ENCODE measurements at regions of chr18 and their contacts with region 1.

Region 1: DNA sequence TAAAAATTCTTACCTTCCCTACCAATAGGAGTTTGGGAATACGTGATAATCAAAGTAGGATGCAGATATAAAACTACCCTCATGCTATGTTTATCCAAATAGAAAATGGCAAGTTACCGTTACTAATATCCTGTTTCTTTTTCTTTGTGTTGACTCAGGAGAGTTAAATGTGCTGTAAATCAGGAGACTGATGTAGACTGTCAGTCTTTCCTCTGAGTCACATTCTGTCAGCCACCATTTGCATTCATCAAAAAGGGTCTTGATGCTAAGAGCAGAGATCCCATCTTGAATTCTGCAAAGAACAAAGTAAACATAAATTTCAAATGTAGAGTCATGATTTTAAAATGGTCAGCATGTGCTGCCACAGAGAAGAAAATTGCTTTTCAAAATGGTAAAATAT is 712.8 kb downstream of the SOCS6 start:
- DNase-seq: no peak
- ATAC-seq: no peak
- H3K4me3 ChIP-seq: no peak overlapping the region
- H3K27ac ChIP-seq: no peak overlapping the region
- H3K4me1 ChIP-seq: no peaks in the 10 kb centered on the region
- H3K27me3 ChIP-seq: no peaks in the 10 kb centered on the region
- CTCF ChIP-seq: no peak
- EP300 ChIP-seq: no peak
- POLR2A ChIP-seq: no peak
- RAD21 ChIP-seq: no peak

Region 2: GRCh38 chr18:70709144-70709543 is 292.5 kb before region 1 on chr18:
- CTCF ChIA-PET with region 1: no interaction called
- POLR2A ChIA-PET with region 1: no interaction called
- RAD21 ChIA-PET with region 1: no interaction called
- SMC1A ChIA-PET with region 1: no interaction called
- in situ Hi-C with region 1: no loop called
- intact Hi-C with region 1: no loop called
- DNase-seq: no peak
- ATAC-seq: no peak
- H3K4me3 ChIP-seq: no peak overlapping the region
- H3K27ac ChIP-seq: no peak overlapping the region
- H3K4me1 ChIP-seq: no peaks in the 10 kb centered on the region
- H3K27me3 ChIP-seq: no peaks in the 10 kb centered on the region
- CTCF ChIP-seq: no peak
- EP300 ChIP-seq: no peak
- POLR2A ChIP-seq: no peak
- RAD21 ChIP-seq: no peak

Region 3: GRCh38 chr18:71068338-71068737 is 66.7 kb after region 1 on chr18:
- CTCF ChIA-PET with region 1: no interaction called
- POLR2A ChIA-PET with region 1: no interaction called
- RAD21 ChIA-PET with region 1: no interaction called
- SMC1A ChIA-PET with region 1: no interaction called
- in situ Hi-C with region 1: no loop called
- intact Hi-C with region 1: no loop called
- DNase-seq: no peak
- ATAC-seq: no peak
- H3K4me3 ChIP-seq: no peak overlapping the region
- H3K27ac ChIP-seq: no peak overlapping the region
- H3K4me1 ChIP-seq: no peaks in the 10 kb centered on the region
- H3K27me3 ChIP-seq: no peaks in the 10 kb centered on the region
- CTCF ChIP-seq: no peak
- EP300 ChIP-seq: no peak
- POLR2A ChIP-seq: no peak
- RAD21 ChIP-seq: no peak

Region 4: DNA sequence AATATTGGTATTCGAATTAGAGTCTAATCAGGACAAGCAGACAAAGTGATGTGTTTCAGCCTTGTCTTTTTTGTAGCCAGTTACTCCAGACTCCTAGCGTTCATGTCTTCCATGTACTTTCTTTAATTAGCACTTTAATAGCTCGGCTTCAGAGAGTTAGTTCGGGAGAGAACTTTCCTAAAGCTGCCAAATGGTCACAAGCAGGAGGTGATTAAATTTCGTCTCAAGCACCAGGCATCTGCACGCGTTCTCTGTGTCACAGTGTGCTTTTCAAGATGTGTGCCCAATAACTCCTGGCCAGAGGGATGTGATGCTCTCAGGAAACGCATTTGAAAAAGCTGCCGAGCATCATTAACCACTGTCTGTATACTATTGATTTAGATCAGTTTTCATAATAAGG is 78.0 kb after region 1 on chr18:
- CTCF ChIA-PET with region 1: no interaction called
- POLR2A ChIA-PET with region 1: no interaction called
- RAD21 ChIA-PET with region 1: interaction called, 11 read pairs
- SMC1A ChIA-PET with region 1: no interaction called
- in situ Hi-C with region 1: no loop called
- intact Hi-C with region 1: no loop called
- DNase-seq: no peak
- ATAC-seq: no peak
- H3K4me3 ChIP-seq: no peak overlapping the region
- H3K27ac ChIP-seq: no peak overlapping the region
- H3K4me1 ChIP-seq: no peaks in the 10 kb centered on the region
- H3K27me3 ChIP-seq: no peaks in the 10 kb centered on the region
- CTCF ChIP-seq: no peak
- EP300 ChIP-seq: no peak
- POLR2A ChIP-seq: no peak
- RAD21 ChIP-seq: no peak

Measured in GM12878 (cell line).